Gastrocnemius medialis (tissue), 4 donors: ENCODE measurements at regions of chr14 and their contacts with region 1.

Region 1: GRCh38 chr14:20343092-20343861 is at the start of gene PARP2:
- DNase-seq: peak; percentile 97 to 98
- ATAC-seq: peak; percentile 96 to 97
- H3K4me3 ChIP-seq: peak within 1 kb of the TSS; percentile 74 to 83 (median 78)
- H3K27ac ChIP-seq: peak within 1 kb of the TSS; percentile 88 to 94 (median 92)
- H3K4me1 ChIP-seq: peaks cover 5 to 10% of the 10 kb centered on the region in 2 donors
- H3K27me3 ChIP-seq: no peaks in the 10 kb centered on the region
- CTCF ChIP-seq: no peak
- POLR2A ChIP-seq: peak; percentile 90 to 97
- total RNA-seq, gene PARP2: 5.1 to 15.0 (median 7.0) TPM

Region 2: GRCh38 chr14:20223410-20223809 is 119.9 kb before region 1 on chr14 and contains the start of gene OR11H6:
- in situ Hi-C with region 1: no loop called
- intact Hi-C with region 1: no loop called
- DNase-seq: no peak
- ATAC-seq: no peak
- H3K4me3 ChIP-seq: no peak within 1 kb of the TSS
- H3K27ac ChIP-seq: no peak within 1 kb of the TSS
- H3K4me1 ChIP-seq: no peaks in the 10 kb centered on the region
- H3K27me3 ChIP-seq: no peaks in the 10 kb centered on the region
- CTCF ChIP-seq: no peak
- POLR2A ChIP-seq: no peak
- total RNA-seq, gene OR11H6: not detected

Region 3: DNA sequence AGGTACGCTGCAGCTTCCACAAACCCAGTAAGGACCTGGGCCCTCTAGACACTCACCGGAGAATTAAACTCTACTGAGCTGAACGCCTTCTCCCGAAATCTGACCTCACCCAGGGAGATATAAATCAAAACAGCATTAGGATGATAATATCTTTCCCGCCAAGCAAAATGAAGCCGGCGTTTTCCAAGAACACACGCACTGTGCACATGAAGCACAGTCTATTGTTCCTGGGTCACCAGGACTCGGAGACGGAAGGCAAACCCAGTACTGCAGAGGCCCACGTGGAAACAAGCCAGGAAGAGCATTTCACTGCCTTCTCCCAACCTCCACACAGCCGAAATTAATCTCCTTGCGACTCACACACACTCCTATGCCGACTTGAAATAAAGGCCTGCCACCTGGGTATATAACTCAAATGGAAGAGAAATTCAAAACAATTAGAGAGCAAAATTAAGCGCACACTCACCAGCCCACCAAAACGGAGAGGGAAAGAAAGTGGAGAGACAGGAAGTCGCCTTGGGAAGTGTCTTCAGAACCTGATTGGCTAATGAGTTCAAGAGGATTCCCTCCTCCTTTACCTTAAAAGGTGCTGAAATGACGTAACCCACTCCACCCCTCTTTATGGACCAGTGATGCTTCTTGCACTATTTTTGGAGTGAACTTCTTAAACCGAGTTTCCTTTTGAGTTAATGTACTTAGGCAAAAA is 10.3 kb before region 1 on chr14 and contains the start of gene CCNB1IP1:
- in situ Hi-C with region 1: no loop called
- intact Hi-C with region 1: loop called (anchors 1 kb)
- DNase-seq: peak; percentile 62 to 68
- ATAC-seq: peak; percentile 100
- H3K4me3 ChIP-seq: peak within 1 kb of the TSS; percentile 61 to 77 (median 70)
- H3K27ac ChIP-seq: peak within 1 kb of the TSS; percentile 85 to 91 (median 88)
- H3K4me1 ChIP-seq: peaks cover 10 to 16% of the 10 kb centered on the region in 2 donors
- H3K27me3 ChIP-seq: no peaks in the 10 kb centered on the region
- CTCF ChIP-seq: no peak
- POLR2A ChIP-seq: peak; percentile 62 to 63
- total RNA-seq, gene CCNB1IP1: 15.7 to 42.9 (median 30.2) TPM

Region 4: GRCh38 chr14:20454516-20455354 is 111.5 kb after region 1 on chr14 and contains the starts of genes APEX1 and OSGEP:
- in situ Hi-C with region 1: loop called in 3 of 4 experiments (anchors 25 kb)
- intact Hi-C with region 1: no loop called
- DNase-seq: peak; percentile 99
- ATAC-seq: peak; percentile 95 to 96
- H3K4me3 ChIP-seq: peak within 1 kb of the TSS; percentile 81 to 88 (median 87)
- H3K27ac ChIP-seq: peak within 1 kb of the TSS; percentile 86 to 98 (median 98)
- H3K4me1 ChIP-seq: peaks cover 23 to 29% of the 10 kb centered on the region in 2 donors
- H3K27me3 ChIP-seq: no peaks in the 10 kb centered on the region
- CTCF ChIP-seq: peak in 3 of 5 experiments; percentile 20 to 51 (median 51)
- POLR2A ChIP-seq: peak; percentile 91 to 95
- total RNA-seq, gene APEX1: 65.6 to 132 (median 94.2) TPM
- total RNA-seq, gene OSGEP: 15.8 to 21.7 (median 20.5) TPM

Region 5: DNA sequence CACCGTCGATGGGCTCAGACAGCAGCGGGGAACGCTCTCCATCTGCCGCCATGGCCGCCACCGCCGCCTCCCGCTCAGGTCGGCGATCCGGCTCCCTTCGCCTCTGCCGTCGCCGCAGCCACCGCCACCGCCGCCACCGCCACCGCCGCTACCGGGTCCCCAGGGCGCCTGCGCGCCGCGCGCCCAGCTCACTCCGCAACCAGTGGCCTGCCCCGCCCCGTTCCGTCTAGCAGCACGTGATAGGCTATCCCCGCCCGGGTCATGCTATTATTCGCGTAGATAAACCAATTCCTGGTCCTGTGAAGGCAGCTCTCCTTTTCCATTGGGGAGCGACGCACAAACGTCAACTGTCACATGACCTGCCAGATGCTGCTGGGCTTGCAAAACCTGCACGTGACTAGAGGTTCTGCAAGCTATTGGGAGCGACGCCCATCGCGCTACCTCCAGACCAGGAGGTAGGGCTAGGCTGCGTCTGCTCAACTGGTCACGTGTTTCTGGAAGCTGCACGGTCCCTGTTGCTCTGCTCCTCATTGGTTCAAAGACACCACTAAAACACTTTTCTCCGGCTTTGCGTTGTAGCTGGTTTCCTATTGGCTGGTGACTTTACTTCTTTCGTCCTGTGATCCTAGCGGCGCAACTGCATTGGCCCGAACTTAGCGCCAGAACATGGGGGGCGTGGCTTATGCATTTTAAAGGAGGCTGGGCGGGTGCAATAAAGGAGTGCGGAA is 118.2 kb after region 1 on chr14 and contains the start of gene PIP4P1:
- in situ Hi-C with region 1: loop called in 3 of 4 experiments (anchors 25 kb)
- intact Hi-C with region 1: loop called (anchors 1 kb)
- DNase-seq: peak; percentile 100
- ATAC-seq: peak; percentile 96 to 97
- H3K4me3 ChIP-seq: peak within 1 kb of the TSS; percentile 93 to 99 (median 96)
- H3K27ac ChIP-seq: peak within 1 kb of the TSS; percentile 98 to 99 (median 98)
- H3K4me1 ChIP-seq: peaks cover 15 to 16% of the 10 kb centered on the region in 2 donors
- H3K27me3 ChIP-seq: no peaks in the 10 kb centered on the region
- CTCF ChIP-seq: peak in 2 of 5 experiments; percentile 20 to 39
- POLR2A ChIP-seq: peak; percentile 97 to 99
- total RNA-seq, gene PIP4P1: 18.8 to 38.5 (median 21.7) TPM

Region 6: GRCh38 chr14:20989572-20990551 is 646.6 kb after region 1 on chr14 and contains the start of gene METTL17:
- in situ Hi-C with region 1: loop called in 2 of 4 experiments (anchors 25 kb)
- intact Hi-C with region 1: loop called (anchors 10 kb)
- DNase-seq: peak; percentile 87 to 95
- ATAC-seq: peak; percentile 98
- H3K4me3 ChIP-seq: peak within 1 kb of the TSS; percentile 72 to 99 (median 97)
- H3K27ac ChIP-seq: peak within 1 kb of the TSS; percentile 73 to 89 (median 81)
- H3K4me1 ChIP-seq: peaks cover 17 to 20% of the 10 kb centered on the region in 2 donors
- H3K27me3 ChIP-seq: no peaks in the 10 kb centered on the region
- CTCF ChIP-seq: peak in 1 of 5 experiments; percentile 10
- POLR2A ChIP-seq: peak; percentile 10 to 57
- total RNA-seq, gene METTL17: 33.9 to 69.5 (median 50.8) TPM